Adrenal gland (tissue), 19 donors: ENCODE measurements at regions of chr22 and their contacts with region 1.

Region 1: GRCh38 chr22:36398621-36399469 is 11.1 kb upstream of the MYH9 start:
- DNase-seq: no peak
- H3K4me3 ChIP-seq: no peak overlapping the region
- H3K27ac ChIP-seq: no peak overlapping the region
- H3K4me1 ChIP-seq: peaks cover 0 to 10% of the 10 kb centered on the region in 2 donors
- H3K27me3 ChIP-seq: no peaks in the 10 kb centered on the region
- CTCF ChIP-seq: no peak
- POLR2A ChIP-seq: no peak

Region 2: GRCh38 chr22:36439481-36440271 is 40.8 kb after region 1 on chr22:
- intact Hi-C with region 1: loop called in 1 of 2 experiments (anchors 10 kb)
- DNase-seq: peak; percentile 78 to 92 (median 88)
- H3K4me3 ChIP-seq: no peak overlapping the region
- H3K27ac ChIP-seq: peak overlapping the region in 4 of 5 donors; percentile 7 to 79 (median 63)
- H3K4me1 ChIP-seq: peaks cover 12 to 17% of the 10 kb centered on the region in 2 donors
- H3K27me3 ChIP-seq: no peaks in the 10 kb centered on the region
- CTCF ChIP-seq: no peak
- POLR2A ChIP-seq: no peak